ENCODE measurements at regions of chr15 and their contacts with region 1.

Region 1: DNA sequence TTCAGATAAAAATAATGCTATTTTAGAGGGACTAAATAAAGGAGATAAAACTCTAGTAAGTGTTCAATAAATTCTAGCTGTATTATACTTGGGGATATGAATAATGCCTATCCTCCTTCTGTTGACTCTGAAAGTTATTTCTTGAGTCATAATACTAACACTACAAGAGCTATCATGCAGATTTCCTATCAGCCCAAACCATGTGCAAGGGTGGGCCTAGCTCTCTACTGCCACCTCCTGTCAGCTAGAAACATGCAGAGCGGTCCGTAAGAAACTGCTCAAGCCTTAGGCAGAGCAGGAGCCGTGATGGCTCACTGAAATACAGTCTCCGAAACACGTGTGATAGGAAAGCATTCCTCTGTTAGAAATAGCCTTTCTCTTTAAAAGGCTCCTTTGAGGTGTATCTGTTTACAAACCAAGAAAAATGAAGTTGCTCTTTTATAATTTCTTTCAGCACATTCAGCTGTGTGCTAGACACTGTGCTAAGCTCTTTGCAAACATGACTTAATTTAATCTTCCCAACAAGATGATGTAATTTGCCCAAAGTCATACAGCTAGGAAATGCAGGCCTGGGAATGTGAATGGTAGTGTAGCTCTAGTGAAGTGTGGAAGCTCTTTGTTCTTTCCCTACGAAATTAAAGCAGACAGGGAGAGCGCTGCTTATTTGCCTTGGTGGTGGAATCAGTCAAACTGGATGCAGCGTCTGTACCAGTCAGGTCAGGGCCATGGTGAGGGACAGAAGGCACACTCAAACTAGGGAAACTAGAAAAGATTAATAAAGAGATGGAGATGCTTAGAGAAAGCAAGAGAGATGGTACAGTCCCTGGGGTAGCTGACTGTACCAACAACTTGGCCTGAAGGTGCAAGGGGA is 43.1 kb downstream of the MTHFS start:
- DNase-seq: peak; percentile 79
- ATAC-seq: peak; percentile 99
- H3K4me3 Mint-ChIP-seq: no peak overlapping the region
- H3K27ac Mint-ChIP-seq: no peak overlapping the region
- H3K4me1 Mint-ChIP-seq: peaks cover 15% of the 10 kb centered on the region
- H3K27me3 Mint-ChIP-seq: no peaks in the 10 kb centered on the region
- CTCF ChIP-seq: peak; percentile 94

Region 2: GRCh38 chr15:79339564-79340314 is 514.0 kb before region 1 on chr15:
- CTCF ChIA-PET with region 1: interaction called, 17 read pairs
- POLR2A ChIA-PET with region 1: no interaction called
- intact Hi-C with region 1: no loop called
- DNase-seq: peak; percentile 6
- ATAC-seq: no peak
- H3K4me3 Mint-ChIP-seq: no peak overlapping the region
- H3K27ac Mint-ChIP-seq: no peak overlapping the region
- H3K4me1 Mint-ChIP-seq: no peaks in the 10 kb centered on the region
- H3K27me3 Mint-ChIP-seq: no peaks in the 10 kb centered on the region
- CTCF ChIP-seq: peak; percentile 71

Region 3: GRCh38 chr15:79596051-79596507 is 257.6 kb before region 1 on chr15:
- CTCF ChIA-PET with region 1: interaction called, 17 read pairs
- POLR2A ChIA-PET with region 1: no interaction called
- intact Hi-C with region 1: no loop called
- DNase-seq: peak; percentile 78
- ATAC-seq: peak; percentile 100
- H3K4me3 Mint-ChIP-seq: no peak overlapping the region
- H3K27ac Mint-ChIP-seq: no peak overlapping the region
- H3K4me1 Mint-ChIP-seq: no peaks in the 10 kb centered on the region
- H3K27me3 Mint-ChIP-seq: peaks cover 24% of the 10 kb centered on the region
- CTCF ChIP-seq: peak; percentile 85

Region 4: GRCh38 chr15:79837846-79838245 is 15.8 kb before region 1 on chr15:
- CTCF ChIA-PET with region 1: interaction called, 23 read pairs
- POLR2A ChIA-PET with region 1: no interaction called
- intact Hi-C with region 1: no loop called
- DNase-seq: no peak
- ATAC-seq: no peak
- H3K4me3 Mint-ChIP-seq: no peak overlapping the region
- H3K27ac Mint-ChIP-seq: no peak overlapping the region
- H3K4me1 Mint-ChIP-seq: no peaks in the 10 kb centered on the region
- H3K27me3 Mint-ChIP-seq: no peaks in the 10 kb centered on the region
- CTCF ChIP-seq: no peak

Region 5: DNA sequence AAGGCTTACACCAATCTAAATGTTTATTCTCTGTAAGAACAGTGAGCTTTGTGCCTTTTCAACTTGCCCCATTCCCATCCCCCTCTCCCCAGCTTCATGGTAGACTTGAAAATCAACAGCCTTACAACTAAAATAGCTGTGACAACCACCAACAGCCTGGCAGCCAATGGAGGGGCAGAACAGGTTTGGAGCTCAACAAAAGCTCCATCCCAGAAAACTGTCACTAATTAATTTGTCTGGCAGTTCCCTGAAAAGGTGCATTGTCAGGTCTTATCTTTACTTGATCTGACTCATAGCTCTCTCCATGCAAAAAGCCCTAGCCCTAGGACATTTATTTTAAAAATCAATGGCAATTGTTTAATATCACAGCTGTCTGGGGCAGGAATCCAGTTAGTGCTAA is 20.6 kb after region 1 on chr15:
- CTCF ChIA-PET with region 1: interaction called, 19 read pairs
- POLR2A ChIA-PET with region 1: no interaction called
- intact Hi-C with region 1: no loop called
- DNase-seq: no peak
- ATAC-seq: no peak
- H3K4me3 Mint-ChIP-seq: no peak overlapping the region
- H3K27ac Mint-ChIP-seq: no peak overlapping the region
- H3K4me1 Mint-ChIP-seq: peaks cover 19% of the 10 kb centered on the region
- H3K27me3 Mint-ChIP-seq: no peaks in the 10 kb centered on the region
- CTCF ChIP-seq: no peak

Region 6: GRCh38 chr15:79989682-79990081 is 136.0 kb after region 1 on chr15:
- CTCF ChIA-PET with region 1: interaction called, 64 read pairs
- POLR2A ChIA-PET with region 1: no interaction called
- intact Hi-C with region 1: no loop called
- DNase-seq: no peak
- ATAC-seq: no peak
- H3K4me3 Mint-ChIP-seq: no peak overlapping the region
- H3K27ac Mint-ChIP-seq: no peak overlapping the region
- H3K4me1 Mint-ChIP-seq: peaks cover 6% of the 10 kb centered on the region
- H3K27me3 Mint-ChIP-seq: no peaks in the 10 kb centered on the region
- CTCF ChIP-seq: no peak

Region 7: GRCh38 chr15:80199366-80199765 is 345.7 kb after region 1 on chr15:
- CTCF ChIA-PET with region 1: no interaction called
- POLR2A ChIA-PET with region 1: no interaction called
- intact Hi-C with region 1: no loop called
- DNase-seq: no peak
- ATAC-seq: no peak
- H3K4me3 Mint-ChIP-seq: no peak overlapping the region
- H3K27ac Mint-ChIP-seq: no peak overlapping the region
- H3K4me1 Mint-ChIP-seq: no peaks in the 10 kb centered on the region
- H3K27me3 Mint-ChIP-seq: peaks cover 5% of the 10 kb centered on the region
- CTCF ChIP-seq: no peak

Measured in activated CD8-positive, alpha-beta T cell treated with anti-CD3 and anti-CD28 coated beads for 36 hours (primary cell).